Heart left ventricle (tissue), 16 donors: ENCODE measurements at regions of chr17 and their contacts with region 1.

Region 1: DNA sequence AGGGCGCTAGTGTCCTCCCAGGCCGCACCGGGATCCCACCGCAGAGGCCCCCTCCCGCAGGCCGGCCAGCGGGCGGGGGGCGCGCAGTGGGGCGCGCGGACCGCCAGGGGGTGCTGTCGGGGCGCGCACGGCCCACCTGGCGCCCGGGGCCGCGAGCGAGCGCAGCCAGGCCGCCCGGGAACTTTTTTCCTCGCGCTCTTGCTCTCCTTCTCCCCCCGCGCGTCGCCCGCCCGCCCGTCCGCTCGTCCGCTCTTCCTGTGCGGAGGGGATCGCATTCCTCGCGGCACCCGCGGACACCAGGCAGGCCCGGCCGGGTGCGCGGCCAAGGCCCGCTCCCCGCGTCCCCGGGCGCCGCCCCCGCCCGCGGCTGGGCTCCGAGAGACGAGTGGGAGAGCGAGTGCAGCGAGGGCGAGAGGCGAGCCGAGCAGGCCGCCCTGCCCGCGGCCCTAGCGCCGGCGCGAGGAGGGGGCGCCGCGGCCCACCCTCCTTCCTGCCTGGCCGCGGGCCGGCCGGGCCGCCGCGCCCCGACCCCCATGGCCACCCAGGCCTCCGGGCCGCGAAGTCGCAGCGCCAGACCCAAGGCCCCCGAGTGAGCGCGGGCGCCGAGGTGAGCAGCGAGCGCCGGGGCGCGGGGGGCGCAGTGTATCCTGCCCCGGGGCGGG is at the start of gene RAI1:
- DNase-seq: peak; percentile 86 to 88 (median 87)
- ATAC-seq: peak; percentile 27 to 73 (median 66)
- H3K4me3 ChIP-seq: peak within 1 kb of the TSS; percentile 68 to 96 (median 81)
- H3K27ac ChIP-seq: peak within 1 kb of the TSS; percentile 90 to 97 (median 96)
- H3K4me1 ChIP-seq: peaks cover 15 to 46% (median 32%) of the 10 kb centered on the region in 12 donors
- H3K27me3 ChIP-seq: no peaks in the 10 kb centered on the region
- CTCF ChIP-seq: peak; percentile 29 to 98 (median 82)
- POLR2A ChIP-seq: no peak
- total RNA-seq, gene RAI1: 15.1 to 37.2 (median 20.8) TPM

Region 2: GRCh38 chr17:16589097-16589969 is 1092.0 kb before region 1 on chr17:
- intact Hi-C with region 1: no loop called
- DNase-seq: peak; percentile 88 to 97 (median 91)
- ATAC-seq: peak; percentile 77 to 94 (median 90)
- H3K4me3 ChIP-seq: peak overlapping the region; percentile 44 to 84 (median 64)
- H3K27ac ChIP-seq: peak overlapping the region in 10 of 12 donors; percentile 35 to 80 (median 62)
- H3K4me1 ChIP-seq: peaks cover 0 to 14% (median 3%) of the 10 kb centered on the region in 12 donors
- H3K27me3 ChIP-seq: no peaks in the 10 kb centered on the region
- CTCF ChIP-seq: peak; percentile 98 to 100 (median 99)
- POLR2A ChIP-seq: peak in 1 of 2 donors; percentile 67

Region 3: GRCh38 chr17:17729620-17730249 is 48.4 kb after region 1 on chr17:
- intact Hi-C with region 1: loop called in 4 of 10 experiments (anchors 2 to 5 kb)
- DNase-seq: no peak
- ATAC-seq: peak in 2 of 4 donors; percentile 27 to 30
- H3K4me3 ChIP-seq: no peak overlapping the region
- H3K27ac ChIP-seq: peak overlapping the region in 4 of 12 donors; percentile 16 to 55 (median 28)
- H3K4me1 ChIP-seq: peaks cover 0 to 63% (median 38%) of the 10 kb centered on the region in 12 donors
- H3K27me3 ChIP-seq: no peaks in the 10 kb centered on the region
- CTCF ChIP-seq: peak; percentile 35 to 55 (median 44)
- POLR2A ChIP-seq: no peak

Region 4: DNA sequence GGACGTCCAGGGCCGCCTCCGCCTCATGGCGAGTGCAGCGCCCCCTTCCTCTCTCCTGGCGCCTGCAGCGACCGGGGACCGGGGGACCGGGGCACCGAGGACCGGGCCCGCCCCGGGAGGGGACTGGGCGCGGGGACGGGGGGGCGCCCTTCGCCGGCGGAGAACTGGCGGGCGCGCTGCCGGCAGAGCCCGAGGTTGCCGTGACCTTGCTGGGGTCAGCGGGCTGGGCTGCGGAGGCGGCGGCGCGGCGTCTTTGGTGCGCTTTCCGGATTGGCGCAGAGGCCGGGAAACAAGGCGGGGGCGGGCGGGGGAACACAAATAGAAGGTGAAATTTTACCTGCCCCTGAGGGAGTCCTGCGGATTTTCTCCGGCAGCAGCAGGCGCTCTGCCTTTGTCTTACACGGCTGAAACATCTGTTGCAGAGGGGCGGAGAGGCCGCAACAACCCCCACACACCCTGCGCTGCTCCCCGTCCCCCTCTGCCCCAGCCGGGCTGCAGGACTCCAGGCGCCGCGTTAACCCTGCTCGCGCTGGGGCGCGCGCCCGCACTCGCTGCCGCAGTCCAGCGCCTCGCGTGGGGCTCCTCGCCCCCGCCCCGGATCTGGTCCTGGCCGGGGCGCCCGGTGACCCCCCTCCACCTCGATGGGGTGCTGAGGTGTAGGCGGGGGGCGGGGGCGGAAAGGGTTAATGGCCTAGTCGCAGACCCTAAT is 102.0 kb after region 1 on chr17:
- intact Hi-C with region 1: loop called in 7 of 10 experiments (anchors 2 to 10 kb)
- DNase-seq: peak; percentile 82 to 91 (median 86)
- ATAC-seq: peak in 3 of 4 donors; percentile 23 to 55 (median 53)
- H3K4me3 ChIP-seq: peak overlapping the region; percentile 40 to 73 (median 62)
- H3K27ac ChIP-seq: peak overlapping the region; percentile 80 to 98 (median 92)
- H3K4me1 ChIP-seq: peaks cover 7 to 84% (median 61%) of the 10 kb centered on the region in 12 donors
- H3K27me3 ChIP-seq: peaks cover 0 to 15% (median 0%) of the 10 kb centered on the region in 9 donors
- CTCF ChIP-seq: peak in 4 of 12 donors; percentile 22 to 52 (median 42)
- POLR2A ChIP-seq: no peak

Region 5: DNA sequence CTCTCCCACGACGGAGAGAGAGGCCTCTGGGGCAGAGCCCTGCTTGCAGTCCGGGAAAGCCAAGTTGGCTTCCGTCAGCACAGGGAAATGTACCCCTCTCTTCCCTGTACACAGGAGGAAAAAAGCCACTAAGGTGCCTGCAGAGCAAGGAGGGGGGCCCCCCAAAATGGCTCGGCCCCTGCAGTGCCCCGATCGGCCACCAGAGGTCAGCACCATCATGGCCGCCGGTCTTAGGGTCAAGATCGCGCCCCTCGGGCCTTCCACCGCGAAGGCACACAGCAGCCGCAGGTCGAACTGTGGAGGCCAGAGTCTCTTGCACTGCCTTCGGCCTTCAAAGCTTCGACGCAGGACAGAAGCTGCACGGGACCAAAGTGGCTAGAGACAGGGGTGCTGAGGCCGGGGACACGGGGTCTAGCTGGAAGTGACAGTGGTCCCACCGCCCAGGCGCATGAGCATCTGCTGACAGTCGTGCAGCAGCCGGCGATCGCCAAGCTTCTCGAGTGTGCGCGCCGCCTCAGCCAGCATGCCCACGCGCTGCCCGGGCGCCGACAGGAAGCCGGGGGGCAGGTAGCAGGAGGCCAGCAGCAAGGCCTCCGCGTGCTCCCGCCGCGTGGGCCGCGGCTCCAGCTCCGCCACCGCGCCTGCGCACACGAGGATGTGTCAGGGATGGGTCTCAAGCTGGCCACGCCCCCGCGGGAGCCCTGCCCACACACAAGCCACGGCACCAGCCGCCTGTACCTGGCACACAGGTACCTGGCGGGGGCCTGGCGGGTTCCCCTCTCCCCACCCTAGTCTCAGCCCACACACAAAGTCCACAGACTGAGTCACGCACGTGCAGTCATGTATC is 131.1 kb after region 1 on chr17:
- intact Hi-C with region 1: loop called in 2 of 10 experiments (anchors 2 to 5 kb)
- DNase-seq: peak; percentile 74 to 89 (median 77)
- ATAC-seq: peak; percentile 21 to 46 (median 40)
- H3K4me3 ChIP-seq: no peak overlapping the region
- H3K27ac ChIP-seq: peak overlapping the region in 6 of 12 donors; percentile 3 to 71 (median 21)
- H3K4me1 ChIP-seq: peaks cover 9 to 82% (median 30%) of the 10 kb centered on the region in 12 donors
- H3K27me3 ChIP-seq: no peaks in the 10 kb centered on the region
- CTCF ChIP-seq: peak in 11 of 12 donors; percentile 99 to 100 (median 100)
- POLR2A ChIP-seq: no peak

Region 6: DNA sequence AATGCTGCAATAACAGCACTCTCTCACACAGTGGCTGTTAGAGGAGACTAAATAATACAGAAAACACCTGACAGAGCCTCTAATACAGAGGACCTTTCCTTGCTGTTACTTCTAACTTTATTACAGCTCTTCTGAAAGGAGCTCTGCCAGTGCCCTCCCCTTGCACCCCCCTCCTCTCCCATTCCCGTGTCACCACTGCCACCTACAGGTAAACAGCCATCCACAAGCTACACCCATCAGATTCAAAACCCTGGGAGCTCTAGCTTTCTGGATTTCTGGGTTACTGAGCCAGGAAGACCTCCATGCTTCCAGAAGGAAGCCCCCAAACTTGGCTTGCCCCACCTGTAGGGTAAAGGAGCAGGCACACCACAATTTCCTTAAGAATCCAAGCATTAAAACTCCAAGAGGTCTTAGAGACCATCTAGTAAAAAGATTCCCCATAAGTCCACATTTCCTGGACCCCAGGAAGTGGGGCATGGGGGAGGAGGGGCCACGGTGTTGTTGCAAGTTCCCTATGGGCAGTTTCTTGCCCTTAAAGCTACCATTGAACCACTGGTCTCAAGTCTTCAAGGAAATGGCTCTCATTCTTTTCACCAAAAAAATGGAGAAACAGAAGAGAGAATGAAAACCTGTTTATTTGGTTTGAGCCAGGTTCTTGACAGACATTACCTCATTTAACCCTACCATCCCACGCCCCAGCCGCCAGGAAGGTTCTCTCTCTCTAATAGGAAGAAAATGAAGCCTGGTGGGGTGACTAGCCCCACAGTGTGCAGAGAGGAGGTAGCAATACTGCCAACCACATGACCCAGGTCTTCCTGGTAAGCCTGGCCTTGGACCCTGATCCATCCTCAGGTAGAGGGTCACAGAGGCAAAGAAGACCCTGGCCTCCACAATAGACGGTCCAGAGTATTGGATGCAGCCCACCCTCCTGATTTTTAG is 238.1 kb after region 1 on chr17:
- intact Hi-C with region 1: loop called in 7 of 10 experiments (anchors 2 to 10 kb)
- DNase-seq: peak; percentile 74 to 83 (median 75)
- ATAC-seq: peak; percentile 54 to 78 (median 60)
- H3K4me3 ChIP-seq: no peak overlapping the region
- H3K27ac ChIP-seq: peak overlapping the region in 6 of 12 donors; percentile 15 to 88 (median 34)
- H3K4me1 ChIP-seq: peaks cover 0 to 58% (median 42%) of the 10 kb centered on the region in 12 donors
- H3K27me3 ChIP-seq: no peaks in the 10 kb centered on the region
- CTCF ChIP-seq: peak; percentile 60 to 82 (median 73)
- POLR2A ChIP-seq: no peak

Region 7: DNA sequence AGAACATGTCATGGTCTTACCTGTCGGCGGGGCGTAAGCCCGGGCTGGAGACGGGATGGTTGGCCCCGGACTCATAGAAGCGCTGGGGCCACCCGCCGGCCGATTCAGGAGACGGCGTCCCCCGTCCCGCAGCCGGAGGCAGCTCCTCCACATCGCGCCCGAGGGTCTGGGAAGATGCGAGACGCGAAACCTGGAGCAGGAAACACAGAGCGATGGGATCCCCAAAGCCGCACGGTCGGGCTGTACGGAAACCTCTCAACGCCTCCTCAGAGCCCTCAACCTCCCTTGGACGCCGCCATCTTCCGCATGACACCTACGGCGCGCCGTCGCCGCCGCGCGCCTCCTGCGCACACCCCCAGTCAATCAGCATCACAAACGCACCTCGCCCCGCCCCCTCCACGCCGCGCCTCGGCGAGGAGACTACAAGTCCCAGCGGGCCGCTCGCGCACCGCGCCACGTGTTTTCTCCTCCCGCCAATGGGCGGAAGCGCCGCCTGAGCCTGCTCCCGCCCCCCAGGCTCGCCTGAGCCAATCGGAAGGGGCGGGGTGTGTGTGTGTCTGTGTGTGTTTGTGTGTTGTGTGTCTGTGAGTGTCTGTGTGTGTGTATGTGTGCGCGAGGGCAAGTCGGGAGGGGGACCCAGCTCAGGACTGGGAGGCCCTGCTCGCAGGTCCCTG is 357.7 kb after region 1 on chr17 and contains the starts of genes ATPAF2 and GID4:
- intact Hi-C with region 1: loop called in 8 of 10 experiments (anchors 5 to 10 kb)
- DNase-seq: peak; percentile 99 to 100 (median 100)
- ATAC-seq: peak; percentile 97 to 99 (median 97)
- H3K4me3 ChIP-seq: peak within 1 kb of the TSS; percentile 72 to 95 (median 88)
- H3K27ac ChIP-seq: peak within 1 kb of the TSS; percentile 68 to 89 (median 75)
- H3K4me1 ChIP-seq: peaks cover 0 to 57% (median 32%) of the 10 kb centered on the region in 12 donors
- H3K27me3 ChIP-seq: no peaks in the 10 kb centered on the region
- CTCF ChIP-seq: no peak
- POLR2A ChIP-seq: peak in 1 of 2 donors; percentile 47
- total RNA-seq, gene ATPAF2: 25.6 to 46.2 (median 37.6) TPM
- total RNA-seq, gene GID4: 15.3 to 27.7 (median 18.2) TPM